ENCODE measurements at regions of chr7 and their contacts with region 1.

Region 1: DNA sequence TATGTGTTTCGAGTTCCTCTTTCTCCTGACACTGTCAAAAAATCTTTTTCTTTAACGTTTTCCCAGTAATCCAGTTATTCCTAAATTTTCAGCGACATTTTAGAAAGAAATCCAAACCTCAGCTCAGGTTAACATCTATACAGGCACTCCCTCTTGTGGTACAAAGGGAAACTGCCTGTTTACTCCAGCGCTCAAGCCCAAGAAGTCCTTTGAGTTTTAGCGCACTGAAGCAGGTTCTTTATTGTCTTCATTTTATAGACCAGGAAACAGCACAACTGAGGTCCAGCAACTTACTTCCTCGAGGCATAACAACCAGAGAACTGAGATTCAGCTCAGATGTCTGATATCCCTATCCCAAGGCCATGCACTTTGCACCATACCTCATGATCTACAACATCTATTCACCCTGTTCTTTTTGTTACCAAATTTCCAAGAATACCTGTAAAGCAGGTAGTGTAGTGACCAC is 287.2 kb upstream of the MKLN1 start:
- DNase-seq: no peak
- ATAC-seq: peak; percentile 83
- H3K4me3 ChIP-seq: no peak overlapping the region
- H3K27ac ChIP-seq: peak overlapping the region; percentile 72
- H3K4me1 ChIP-seq: peaks cover 22% of the 10 kb centered on the region
- H3K27me3 ChIP-seq: no peaks in the 10 kb centered on the region
- CTCF ChIP-seq: peak; percentile 84 to 96 (median 88)
- EP300 ChIP-seq: no peak
- POLR2A ChIP-seq: no peak
- RAD21 ChIP-seq: peak; percentile 97

Region 2: DNA sequence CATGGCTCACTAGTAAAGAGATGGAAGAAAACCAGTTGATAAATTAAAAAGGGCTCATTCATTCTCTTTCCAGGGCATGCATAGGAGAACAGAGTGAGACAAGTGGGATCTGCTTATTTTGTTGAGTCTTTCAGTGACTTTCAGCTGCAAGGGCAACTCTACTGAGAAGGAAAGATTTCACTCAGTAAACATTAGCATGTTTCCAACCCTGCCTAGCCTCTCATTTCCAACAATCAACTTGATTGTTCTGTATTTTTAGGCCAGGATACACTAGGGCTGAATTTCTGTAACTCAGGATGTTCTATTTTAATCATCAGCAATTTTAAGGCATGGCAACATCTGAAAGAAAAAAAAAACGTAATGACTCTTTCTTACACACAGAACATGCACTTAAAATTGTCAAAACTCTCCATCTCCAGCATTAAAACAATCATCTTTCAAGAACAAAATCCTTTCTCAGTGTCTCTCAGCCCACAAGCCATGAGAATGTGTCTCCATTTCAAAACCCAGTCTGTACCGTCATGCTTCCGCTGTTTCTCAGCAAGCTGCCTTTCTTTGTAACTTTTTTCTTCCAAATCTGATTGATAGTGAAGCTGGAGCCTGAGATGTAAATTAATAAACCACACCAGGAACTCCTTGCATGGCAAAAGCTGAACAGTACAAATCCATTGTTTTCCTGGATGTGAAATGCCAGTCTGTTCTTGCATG is 159.3 kb before region 1 on chr7:
- CTCF ChIA-PET with region 1: interaction called, 46 read pairs
- POLR2A ChIA-PET with region 1: no interaction called
- RAD21 ChIA-PET with region 1: interaction called, 6 read pairs
- SMC1A ChIA-PET with region 1: interaction called, 20 read pairs
- in situ Hi-C with region 1: no loop called
- intact Hi-C with region 1: no loop called
- DNase-seq: no peak
- ATAC-seq: no peak
- H3K4me3 ChIP-seq: no peak overlapping the region
- H3K27ac ChIP-seq: no peak overlapping the region
- H3K4me1 ChIP-seq: no peaks in the 10 kb centered on the region
- H3K27me3 ChIP-seq: no peaks in the 10 kb centered on the region
- CTCF ChIP-seq: no peak
- EP300 ChIP-seq: no peak
- POLR2A ChIP-seq: no peak
- RAD21 ChIP-seq: no peak

Region 3: DNA sequence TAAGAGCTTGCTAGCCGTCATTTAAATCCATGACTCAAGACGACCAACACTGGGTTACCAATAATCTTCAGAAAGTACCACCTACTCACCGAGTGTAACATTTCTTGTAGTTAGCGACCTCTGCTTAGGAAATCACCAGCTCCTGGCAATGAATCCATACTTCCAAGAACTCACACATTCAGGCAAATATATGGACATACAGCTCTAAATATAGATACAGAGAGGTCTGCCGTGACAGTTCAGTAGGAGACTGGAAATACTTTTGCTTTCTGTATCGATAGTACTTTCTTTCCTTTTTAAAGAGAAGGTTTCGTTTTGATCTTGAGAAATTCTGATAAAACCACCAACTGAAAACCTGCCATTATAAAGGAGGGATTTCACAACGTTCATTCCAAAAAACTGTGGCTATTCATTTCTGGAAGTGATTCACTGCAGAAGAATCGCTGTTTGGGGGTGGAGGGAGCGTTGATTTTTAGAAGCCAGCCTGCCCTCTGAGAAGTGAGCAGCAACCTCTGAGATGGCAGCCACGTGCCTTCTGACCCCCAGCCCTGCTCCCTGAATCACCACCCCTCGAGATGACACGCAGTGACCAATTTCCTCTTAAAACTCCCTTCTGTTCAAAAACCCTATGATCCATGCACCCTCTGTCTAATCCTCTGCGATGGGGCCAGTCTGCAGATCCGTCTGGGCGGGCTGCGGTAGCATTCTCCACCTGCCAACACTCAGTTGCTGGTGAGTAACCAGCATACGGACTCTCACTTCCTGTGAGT is 127.5 kb before region 1 on chr7:
- CTCF ChIA-PET with region 1: interaction called, 30 read pairs
- POLR2A ChIA-PET with region 1: interaction called, 3 read pairs
- RAD21 ChIA-PET with region 1: interaction called, 7 read pairs
- SMC1A ChIA-PET with region 1: interaction called, 6 read pairs
- in situ Hi-C with region 1: no loop called
- intact Hi-C with region 1: no loop called
- DNase-seq: peak; percentile 80
- ATAC-seq: peak; percentile 95
- H3K4me3 ChIP-seq: peak overlapping the region; percentile 58
- H3K27ac ChIP-seq: peak overlapping the region; percentile 94
- H3K4me1 ChIP-seq: peaks cover 44% of the 10 kb centered on the region
- H3K27me3 ChIP-seq: no peaks in the 10 kb centered on the region
- CTCF ChIP-seq: no peak
- EP300 ChIP-seq: peak; percentile 39 to 78
- POLR2A ChIP-seq: peak; percentile 66
- RAD21 ChIP-seq: no peak

Region 4: DNA sequence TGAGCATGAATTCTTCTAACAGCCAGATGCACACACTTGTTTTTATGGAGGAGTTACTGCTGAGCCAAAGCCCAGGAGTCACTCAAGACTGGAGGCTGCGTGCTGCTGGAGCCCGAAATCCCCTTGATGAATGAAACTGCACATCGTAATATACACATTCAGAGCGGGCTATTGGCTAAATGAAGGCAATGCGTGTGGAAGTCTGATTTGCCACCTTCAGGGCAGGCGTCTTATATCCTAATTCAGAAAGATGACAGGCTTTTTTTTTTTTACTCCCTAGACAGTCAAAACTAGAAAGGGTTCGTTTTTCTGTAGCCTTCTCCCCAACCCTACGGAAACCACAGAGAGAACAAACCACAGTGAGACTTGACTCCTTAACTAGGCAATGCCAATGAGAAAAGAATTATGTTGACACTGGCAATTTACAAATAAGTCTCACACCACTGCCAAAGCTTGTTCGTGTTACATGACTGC is 79.3 kb before region 1 on chr7:
- CTCF ChIA-PET with region 1: interaction called, 69 read pairs
- POLR2A ChIA-PET with region 1: interaction called, 3 read pairs
- RAD21 ChIA-PET with region 1: interaction called, 27 read pairs
- SMC1A ChIA-PET with region 1: interaction called, 59 read pairs
- in situ Hi-C with region 1: no loop called
- intact Hi-C with region 1: loop called (anchors 2 kb)
- DNase-seq: peak; percentile 98
- ATAC-seq: peak; percentile 82
- H3K4me3 ChIP-seq: peak overlapping the region; percentile 72
- H3K27ac ChIP-seq: peak overlapping the region; percentile 93
- H3K4me1 ChIP-seq: peaks cover 17% of the 10 kb centered on the region
- H3K27me3 ChIP-seq: no peaks in the 10 kb centered on the region
- CTCF ChIP-seq: no peak
- EP300 ChIP-seq: peak; percentile 90 to 91
- POLR2A ChIP-seq: peak; percentile 95
- RAD21 ChIP-seq: no peak

Region 5: GRCh38 chr7:130982160-130982638 is 58.3 kb before region 1 on chr7:
- CTCF ChIA-PET with region 1: interaction called, 150 read pairs
- POLR2A ChIA-PET with region 1: interaction called, 4 read pairs
- RAD21 ChIA-PET with region 1: interaction called, 80 read pairs
- SMC1A ChIA-PET with region 1: interaction called, 111 read pairs
- in situ Hi-C with region 1: no loop called
- intact Hi-C with region 1: loop called (anchors 1 kb)
- DNase-seq: no peak
- ATAC-seq: peak; percentile 97
- H3K4me3 ChIP-seq: no peak overlapping the region
- H3K27ac ChIP-seq: no peak overlapping the region
- H3K4me1 ChIP-seq: peaks cover 3% of the 10 kb centered on the region; the same call in 1 of the 2 replicates
- H3K27me3 ChIP-seq: no peaks in the 10 kb centered on the region
- CTCF ChIP-seq: peak; percentile 81 to 86 (median 85)
- EP300 ChIP-seq: no peak
- POLR2A ChIP-seq: no peak
- RAD21 ChIP-seq: peak; percentile 81

Region 6: DNA sequence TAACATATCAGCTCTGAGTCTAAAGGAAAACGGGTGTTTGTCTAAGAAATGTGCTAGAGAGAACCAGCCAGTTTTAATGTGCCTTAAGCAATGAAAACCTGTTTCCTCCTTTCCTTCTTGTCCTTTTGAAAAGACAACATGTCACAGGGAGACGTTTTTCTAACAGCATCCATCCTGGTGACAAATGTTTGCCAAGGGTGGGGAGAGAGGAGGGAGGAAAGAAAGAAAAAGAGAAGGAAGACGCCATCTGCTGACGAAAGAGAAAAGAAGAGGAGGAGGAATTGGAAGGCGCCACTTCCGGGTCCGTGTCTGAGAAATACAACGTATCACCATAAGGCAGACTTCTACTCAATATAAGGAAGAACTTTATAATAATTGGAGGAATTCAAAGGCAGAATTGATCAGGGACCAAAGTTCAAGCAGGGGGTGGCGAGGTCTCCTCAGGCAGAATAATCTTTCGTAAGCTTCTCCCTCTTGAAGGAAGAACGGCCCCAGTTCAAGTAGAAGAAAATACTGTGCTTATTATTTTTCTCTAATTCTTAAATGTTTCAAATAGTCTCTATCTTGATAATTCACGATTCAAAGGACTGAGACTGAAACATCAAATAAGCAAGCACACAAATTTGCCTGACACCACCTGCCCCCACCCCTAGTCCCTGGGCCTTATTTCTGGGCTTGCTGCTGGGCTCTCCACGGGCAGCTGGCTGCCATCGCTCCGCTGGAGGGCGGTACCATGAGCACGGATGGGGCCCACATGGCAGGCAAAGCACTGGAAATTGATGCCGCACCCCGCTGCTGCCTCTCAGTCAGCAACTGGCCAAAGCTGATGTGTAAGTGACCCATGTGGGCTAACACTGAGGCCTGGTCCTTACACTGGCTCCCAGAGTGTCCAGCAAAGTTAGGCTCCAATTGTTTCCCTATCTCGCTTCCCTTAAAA is 32.8 kb before region 1 on chr7:
- CTCF ChIA-PET with region 1: interaction called, 22 read pairs
- POLR2A ChIA-PET with region 1: interaction called, 5 read pairs
- RAD21 ChIA-PET with region 1: interaction called, 20 read pairs
- SMC1A ChIA-PET with region 1: interaction called, 31 read pairs
- in situ Hi-C with region 1: no loop called
- intact Hi-C with region 1: loop called (anchors 2 kb)
- DNase-seq: peak; percentile 63
- ATAC-seq: peak; percentile 64
- H3K4me3 ChIP-seq: peak overlapping the region; percentile 22; the same call in 1 of the 2 replicates
- H3K27ac ChIP-seq: peak overlapping the region; percentile 89
- H3K4me1 ChIP-seq: peaks cover 48% of the 10 kb centered on the region
- H3K27me3 ChIP-seq: no peaks in the 10 kb centered on the region
- CTCF ChIP-seq: peak; percentile 46 to 66 (median 54)
- EP300 ChIP-seq: no peak
- POLR2A ChIP-seq: peak; percentile 64
- RAD21 ChIP-seq: peak; percentile 80

Region 7: DNA sequence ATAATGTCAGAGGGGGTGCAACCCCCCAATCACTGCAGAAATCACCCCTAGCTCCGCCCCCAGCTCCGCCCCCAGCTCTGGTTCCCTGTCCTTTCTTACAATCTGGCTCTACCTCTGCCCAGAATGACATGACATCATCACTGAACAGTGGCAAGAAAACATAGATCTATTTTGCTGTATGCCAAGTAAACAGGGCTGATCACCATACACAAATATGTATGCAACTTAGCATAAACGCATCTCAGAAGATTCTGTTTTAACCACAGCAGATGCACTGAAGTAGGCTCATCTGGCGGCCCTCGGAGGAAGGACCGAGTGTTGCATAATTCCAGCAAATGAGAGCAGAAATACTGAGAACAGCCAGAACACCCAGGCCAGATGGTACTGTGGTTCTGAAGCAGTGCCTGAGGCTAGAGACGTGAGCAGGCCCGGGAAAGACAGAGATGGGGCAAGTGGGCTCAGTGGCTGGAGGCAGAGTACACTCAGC is 13.2 kb before region 1 on chr7:
- CTCF ChIA-PET with region 1: interaction called, 18 read pairs
- POLR2A ChIA-PET with region 1: no interaction called
- RAD21 ChIA-PET with region 1: interaction called, 7 read pairs
- SMC1A ChIA-PET with region 1: interaction called, 24 read pairs
- in situ Hi-C with region 1: no loop called
- intact Hi-C with region 1: no loop called
- DNase-seq: no peak
- ATAC-seq: peak; percentile 46
- H3K4me3 ChIP-seq: no peak overlapping the region
- H3K27ac ChIP-seq: peak overlapping the region; percentile 61
- H3K4me1 ChIP-seq: peaks cover 53% of the 10 kb centered on the region
- H3K27me3 ChIP-seq: no peaks in the 10 kb centered on the region
- CTCF ChIP-seq: no peak
- EP300 ChIP-seq: no peak
- POLR2A ChIP-seq: peak; percentile 38; the same call in 1 of the 2 replicates
- RAD21 ChIP-seq: 0 out of 2 replicates have a peak, but pooled peaks have one; percentile 22

Measured in GM12878 (cell line).